Activated CD8-positive, alpha-beta T cell treated with anti-CD3 and anti-CD28 coated beads for 36 hours (primary cell): ENCODE measurements at regions of chr12 and their contacts with region 1.

Region 1: GRCh38 chr12:122500685-122501488 is at the start of gene ZCCHC8:
- DNase-seq: peak; percentile 99
- ATAC-seq: peak; percentile 97
- H3K4me3 Mint-ChIP-seq: peak within 1 kb of the TSS; percentile 99
- H3K27ac Mint-ChIP-seq: peak within 1 kb of the TSS; percentile 97
- H3K4me1 Mint-ChIP-seq: peaks cover 30% of the 10 kb centered on the region
- H3K27me3 Mint-ChIP-seq: no peaks in the 10 kb centered on the region
- CTCF ChIP-seq: no peak
- total RNA-seq, gene ZCCHC8: 28.0 to 28.5 TPM

Region 2: DNA sequence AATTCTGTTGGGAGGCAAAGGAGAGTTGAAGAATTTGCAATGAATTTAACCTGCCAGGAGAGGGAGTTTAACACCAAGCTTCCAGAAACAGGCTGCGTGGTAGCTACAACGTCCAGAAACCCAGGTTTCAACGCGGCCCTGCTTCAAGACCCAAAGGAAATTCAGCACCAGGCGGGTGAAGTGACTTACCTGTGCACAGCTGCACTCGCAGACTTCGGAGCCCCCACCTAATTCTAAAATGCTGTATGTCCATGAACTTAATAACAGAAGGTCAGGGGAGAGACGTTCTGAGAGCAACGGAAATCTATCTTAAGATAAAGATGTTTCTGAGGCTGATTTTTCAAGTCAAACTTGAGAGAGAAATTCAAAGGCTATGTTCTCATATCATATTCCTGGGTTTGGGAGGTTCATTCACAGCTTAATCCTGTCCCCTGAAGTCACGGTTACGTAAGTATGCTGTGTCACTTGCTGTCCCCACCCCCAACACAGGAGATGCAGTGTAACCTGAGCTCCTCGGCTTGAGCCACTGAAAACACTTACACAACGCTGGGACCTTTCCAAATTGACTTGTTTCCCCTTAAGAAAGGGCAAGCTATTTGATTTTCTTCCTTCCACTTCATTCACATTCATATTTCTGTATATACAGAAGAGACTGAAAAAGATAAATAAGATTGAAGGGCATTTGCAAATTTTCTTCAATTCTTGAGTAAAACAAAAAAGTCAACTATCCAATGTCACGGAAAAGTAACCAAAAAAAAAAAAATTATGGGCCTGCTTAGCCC is 101.1 kb before region 1 on chr12:
- CTCF ChIA-PET with region 1: interaction called, 16 read pairs
- POLR2A ChIA-PET with region 1: interaction called, 5 read pairs
- intact Hi-C with region 1: no loop called
- DNase-seq: peak; percentile 69
- ATAC-seq: peak; percentile 69
- H3K4me3 Mint-ChIP-seq: no peak overlapping the region
- H3K27ac Mint-ChIP-seq: peak overlapping the region; percentile 68
- H3K4me1 Mint-ChIP-seq: peaks cover 34% of the 10 kb centered on the region
- H3K27me3 Mint-ChIP-seq: no peaks in the 10 kb centered on the region
- CTCF ChIP-seq: peak; percentile 77

Region 3: DNA sequence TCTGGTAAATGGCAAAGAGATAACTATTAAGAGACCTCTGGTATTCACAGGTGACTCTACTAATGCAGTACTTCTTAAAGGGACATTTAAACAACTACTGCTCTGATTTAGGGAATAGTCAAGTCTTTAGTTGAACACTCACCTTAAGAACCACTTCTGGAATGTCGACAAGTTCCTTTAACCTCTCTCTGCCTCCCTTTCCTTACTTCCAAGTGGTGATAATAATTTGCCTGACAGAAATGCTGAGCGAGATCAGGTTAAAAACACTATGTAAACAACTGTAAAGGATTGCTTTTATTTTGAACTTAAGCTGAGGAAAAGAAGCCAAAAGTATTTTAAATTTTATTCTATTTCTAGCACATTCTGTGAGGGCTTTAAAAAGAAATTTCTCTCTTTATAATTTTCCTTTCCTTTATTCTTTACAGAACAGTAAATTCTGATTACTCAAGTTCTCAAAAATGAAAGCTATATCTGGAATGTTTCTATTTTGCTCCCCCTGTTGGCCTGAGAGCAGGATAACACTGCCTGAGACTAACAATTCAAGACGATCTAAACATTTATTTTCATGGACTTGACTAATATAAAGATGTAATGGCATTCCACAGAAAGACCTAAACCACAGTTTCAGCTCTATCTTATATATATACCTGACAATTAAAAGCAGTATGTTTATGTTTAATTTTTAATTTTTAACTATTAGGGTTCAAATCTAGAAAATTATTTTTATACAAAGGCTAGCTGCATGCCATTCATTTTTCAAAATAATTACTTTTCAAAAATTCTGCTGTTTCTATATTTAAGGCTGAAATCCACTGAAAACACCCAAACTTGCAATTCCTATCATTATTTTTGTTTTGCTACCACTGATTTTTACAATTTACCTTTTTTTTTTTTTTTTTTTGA is 29.3 kb before region 1 on chr12:
- CTCF ChIA-PET with region 1: interaction called, 16 read pairs
- POLR2A ChIA-PET with region 1: interaction called, 7 read pairs
- intact Hi-C with region 1: no loop called
- DNase-seq: no peak
- ATAC-seq: peak; percentile 53
- H3K4me3 Mint-ChIP-seq: no peak overlapping the region
- H3K27ac Mint-ChIP-seq: peak overlapping the region; percentile 32
- H3K4me1 Mint-ChIP-seq: peaks cover 30% of the 10 kb centered on the region
- H3K27me3 Mint-ChIP-seq: no peaks in the 10 kb centered on the region
- CTCF ChIP-seq: peak; percentile 84

Region 4: DNA sequence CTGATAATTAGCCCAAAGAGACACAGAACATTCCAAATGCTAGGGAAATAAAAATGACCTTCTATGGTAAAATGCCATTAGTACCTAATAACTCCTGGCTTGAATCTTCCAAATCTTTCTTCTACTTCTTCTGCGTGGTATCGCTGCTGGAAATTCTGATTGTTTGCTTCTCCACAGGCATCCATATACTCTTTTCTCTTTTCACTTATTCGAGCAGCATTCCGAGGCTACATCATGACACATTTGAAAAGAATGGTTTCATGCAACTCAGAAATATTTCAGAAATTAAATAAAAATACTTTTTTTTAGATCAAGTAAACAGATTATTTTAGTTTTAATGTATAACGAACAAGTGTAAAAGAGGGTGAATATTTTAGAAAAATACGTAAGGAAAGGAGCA is 19.0 kb before region 1 on chr12:
- CTCF ChIA-PET with region 1: no interaction called
- POLR2A ChIA-PET with region 1: interaction called, 17 read pairs
- intact Hi-C with region 1: no loop called
- DNase-seq: no peak
- ATAC-seq: no peak
- H3K4me3 Mint-ChIP-seq: no peak overlapping the region
- H3K27ac Mint-ChIP-seq: no peak overlapping the region
- H3K4me1 Mint-ChIP-seq: peaks cover 16% of the 10 kb centered on the region
- H3K27me3 Mint-ChIP-seq: no peaks in the 10 kb centered on the region
- CTCF ChIP-seq: no peak

Region 5: GRCh38 chr12:122517877-122518276 is 17.0 kb after region 1 on chr12:
- CTCF ChIA-PET with region 1: interaction called, 10 read pairs
- POLR2A ChIA-PET with region 1: interaction called, 179 read pairs
- intact Hi-C with region 1: no loop called
- DNase-seq: no peak
- ATAC-seq: no peak
- H3K4me3 Mint-ChIP-seq: no peak overlapping the region
- H3K27ac Mint-ChIP-seq: peak overlapping the region; percentile 63
- H3K4me1 Mint-ChIP-seq: peaks cover 55% of the 10 kb centered on the region
- H3K27me3 Mint-ChIP-seq: no peaks in the 10 kb centered on the region
- CTCF ChIP-seq: no peak

Region 6: DNA sequence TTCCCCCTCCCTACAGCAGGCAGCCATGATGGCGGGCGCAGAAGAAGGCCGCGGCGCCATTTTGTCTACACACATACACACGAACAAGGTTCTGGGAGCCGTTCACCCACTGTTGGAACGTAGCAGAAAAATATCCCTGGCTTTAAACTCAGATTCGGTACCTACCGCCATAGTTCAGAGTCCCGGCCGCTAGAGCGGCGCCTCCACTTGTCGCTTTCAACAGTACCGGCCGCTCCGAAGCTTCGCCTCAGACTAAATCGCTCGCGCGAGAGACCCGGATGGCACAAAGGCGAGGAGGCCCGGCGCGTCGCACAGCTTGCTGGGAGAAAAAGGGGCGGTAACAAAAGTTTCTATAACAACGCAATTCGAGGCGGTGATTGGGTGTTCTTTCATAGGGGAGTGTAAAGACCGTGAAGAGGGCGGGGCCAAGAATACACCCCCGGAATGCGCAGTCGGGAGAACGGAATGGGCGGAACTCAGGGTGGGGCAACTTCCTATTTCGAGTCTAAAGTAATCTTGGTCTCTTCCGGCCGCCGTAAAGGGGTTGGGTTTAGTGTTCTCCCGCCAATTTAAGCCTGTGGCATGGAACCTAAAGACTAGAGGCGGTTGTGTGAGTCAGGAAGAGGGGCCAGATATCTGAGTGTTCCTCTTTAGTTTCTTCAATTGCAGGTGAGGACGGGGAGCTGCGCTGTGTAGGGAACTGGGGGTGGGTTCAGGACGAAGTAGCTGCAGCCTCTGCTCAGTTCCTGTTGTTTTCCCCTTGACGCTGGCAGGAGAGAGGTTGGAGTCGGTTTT is 26.0 kb after region 1 on chr12 and contains the starts of genes KNTC1 and RSRC2:
- CTCF ChIA-PET with region 1: interaction called, 4 read pairs
- POLR2A ChIA-PET with region 1: interaction called, 179 read pairs
- intact Hi-C with region 1: no loop called
- DNase-seq: peak; percentile 100
- ATAC-seq: peak; percentile 95
- H3K4me3 Mint-ChIP-seq: no peak within 1 kb of the TSS
- H3K27ac Mint-ChIP-seq: no peak within 1 kb of the TSS
- H3K4me1 Mint-ChIP-seq: peaks cover 38% of the 10 kb centered on the region
- H3K27me3 Mint-ChIP-seq: no peaks in the 10 kb centered on the region
- CTCF ChIP-seq: no peak
- total RNA-seq, gene KNTC1: 128 to 129 TPM
- total RNA-seq, gene RSRC2: 108 to 116 TPM